ENCODE measurements at regions of chr3 and their contacts with region 1.

Region 1: GRCh38 chr3:125585595-125586223 is 9.6 kb downstream of the OSBPL11 start:
- DNase-seq: peak; percentile 23
- H3K4me3 Mint-ChIP-seq: no peak overlapping the region
- H3K27ac Mint-ChIP-seq: no peak overlapping the region
- H3K4me1 Mint-ChIP-seq: peaks cover 10% of the 10 kb centered on the region
- H3K27me3 Mint-ChIP-seq: no peaks in the 10 kb centered on the region

Region 2: GRCh38 chr3:124995460-124995994 is 590.2 kb before region 1 on chr3:
- intact Hi-C with region 1: loop called (anchors 1 kb)
- DNase-seq: peak; percentile 33
- H3K4me3 Mint-ChIP-seq: no peak overlapping the region
- H3K27ac Mint-ChIP-seq: no peak overlapping the region
- H3K4me1 Mint-ChIP-seq: peaks cover 20% of the 10 kb centered on the region
- H3K27me3 Mint-ChIP-seq: no peaks in the 10 kb centered on the region

Region 3: DNA sequence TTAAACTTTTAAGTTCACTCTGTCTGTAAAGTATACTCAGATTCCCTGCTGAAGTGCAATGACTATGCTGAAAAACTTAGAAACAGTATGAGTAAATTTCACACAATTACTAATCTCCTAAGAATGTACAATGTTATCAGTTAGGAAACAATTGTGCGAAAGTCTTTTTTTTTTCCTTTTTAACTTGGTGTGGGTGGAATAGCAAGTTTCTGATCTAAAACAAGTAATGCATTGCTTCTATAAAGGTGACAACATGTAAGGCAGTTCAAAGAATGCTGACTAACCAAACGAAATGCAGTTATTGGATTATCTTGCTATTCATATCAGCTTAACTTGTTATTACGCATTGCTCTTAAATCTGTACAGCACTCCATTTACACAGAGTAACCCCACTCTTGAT is 353.8 kb before region 1 on chr3:
- intact Hi-C with region 1: loop called (anchors 10 kb)
- DNase-seq: no peak
- H3K4me3 Mint-ChIP-seq: no peak overlapping the region
- H3K27ac Mint-ChIP-seq: peak overlapping the region; percentile 58
- H3K4me1 Mint-ChIP-seq: peaks cover 23% of the 10 kb centered on the region
- H3K27me3 Mint-ChIP-seq: no peaks in the 10 kb centered on the region

Region 4: DNA sequence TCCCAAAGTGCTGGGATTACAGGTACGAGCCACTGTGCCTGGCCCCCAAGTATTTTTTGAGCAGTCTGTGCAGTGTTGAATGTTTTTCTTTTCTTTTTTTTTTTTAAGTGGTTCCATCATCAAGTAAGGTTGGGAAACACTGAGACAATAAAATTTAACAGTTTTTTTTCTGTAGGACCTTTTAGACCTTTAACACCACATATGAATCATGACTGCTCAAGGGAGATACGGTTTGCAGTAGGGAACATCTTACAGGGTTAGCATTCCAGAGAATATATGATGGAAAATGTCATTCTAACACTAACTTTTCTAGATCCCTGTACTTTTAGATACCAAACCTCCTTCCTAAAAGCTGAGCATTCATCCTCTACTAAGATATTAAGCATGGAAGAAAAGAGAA is 107.4 kb before region 1 on chr3:
- intact Hi-C with region 1: loop called (anchors 10 kb)
- DNase-seq: no peak
- H3K4me3 Mint-ChIP-seq: no peak overlapping the region
- H3K27ac Mint-ChIP-seq: no peak overlapping the region
- H3K4me1 Mint-ChIP-seq: no peaks in the 10 kb centered on the region
- H3K27me3 Mint-ChIP-seq: no peaks in the 10 kb centered on the region

Region 5: GRCh38 chr3:125573216-125573615 is 12.5 kb before region 1 on chr3:
- intact Hi-C with region 1: no loop called
- DNase-seq: no peak
- H3K4me3 Mint-ChIP-seq: no peak overlapping the region
- H3K27ac Mint-ChIP-seq: no peak overlapping the region
- H3K4me1 Mint-ChIP-seq: no peaks in the 10 kb centered on the region
- H3K27me3 Mint-ChIP-seq: no peaks in the 10 kb centered on the region

Region 6: DNA sequence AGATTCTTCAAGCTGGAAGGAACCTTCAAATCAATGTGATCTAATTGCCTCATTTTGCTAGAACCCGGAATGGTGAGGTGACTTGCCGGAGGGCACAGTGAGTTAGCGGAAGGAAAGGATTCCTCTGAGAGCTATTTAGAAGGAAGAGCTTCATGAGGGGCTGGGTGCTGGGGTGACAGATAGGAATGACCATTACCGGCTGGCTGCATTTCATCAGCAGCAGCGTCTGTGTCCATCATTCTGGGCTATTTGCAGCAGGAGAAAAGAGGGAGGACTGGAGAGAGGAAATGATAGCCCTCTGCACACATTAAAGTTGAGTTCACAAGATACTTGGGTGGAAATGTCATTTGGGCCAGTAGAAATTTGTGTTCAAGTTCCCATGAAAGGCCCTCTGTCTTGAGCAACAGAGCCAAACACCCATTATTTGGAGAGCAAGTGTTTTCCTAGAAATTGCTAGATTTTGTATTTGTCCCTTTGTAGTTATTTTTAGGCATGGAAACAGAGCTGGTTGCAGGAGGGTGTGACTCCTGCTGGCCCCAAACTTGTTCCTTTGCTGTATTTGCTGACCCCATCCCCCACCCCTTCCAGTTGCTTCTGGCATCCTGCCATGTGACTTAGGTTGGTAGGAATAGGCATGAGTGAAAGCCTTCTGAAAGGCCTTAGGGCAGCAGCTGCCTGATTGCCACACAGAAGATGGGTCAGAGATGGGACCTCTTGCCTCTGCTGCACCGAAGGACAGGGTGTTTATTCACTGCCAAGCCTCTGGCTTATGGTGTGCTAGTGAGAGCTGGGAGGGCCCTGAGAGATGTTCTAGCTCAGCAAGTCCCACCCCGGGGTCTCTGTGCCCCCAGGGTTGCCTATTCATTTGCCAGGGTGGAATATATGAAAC is 1309.7 kb after region 1 on chr3:
- intact Hi-C with region 1: no loop called
- DNase-seq: no peak
- H3K4me3 Mint-ChIP-seq: no peak overlapping the region
- H3K27ac Mint-ChIP-seq: no peak overlapping the region
- H3K4me1 Mint-ChIP-seq: peaks cover 3% of the 10 kb centered on the region
- H3K27me3 Mint-ChIP-seq: peaks cover 2% of the 10 kb centered on the region